ENCODE measurements at regions of chr3 and their contacts with region 1.

Region 1: GRCh38 chr3:12782172-12782815 is 14.2 kb upstream of the CAND2 start:
- DNase-seq: no peak
- H3K4me3 ChIP-seq: no peak overlapping the region
- H3K27ac ChIP-seq: no peak overlapping the region
- H3K4me1 ChIP-seq: peaks cover 0 to 4% (median 1%) of the 10 kb centered on the region in 4 experiments; a peak in 2 of 7 replicates
- H3K27me3 ChIP-seq: no peaks in the 10 kb centered on the region
- CTCF ChIP-seq: no peak
- EP300 ChIP-seq: no peak
- POLR2A ChIP-seq: 0 out of 3 replicates have a peak, but pooled peaks of 1 of the 2 experiments have one; percentile 26
- RAD21 ChIP-seq: no peak

Region 2: GRCh38 chr3:12758025-12758830 is 24.1 kb before region 1 on chr3:
- CTCF ChIA-PET with region 1: interaction called, 29 read pairs
- POLR2A ChIA-PET with region 1: no interaction called
- DNase-seq: no peak
- H3K4me3 ChIP-seq: no peak overlapping the region
- H3K27ac ChIP-seq: no peak overlapping the region
- H3K4me1 ChIP-seq: peaks cover 0 to 13% (median 8%) of the 10 kb centered on the region in 4 experiments; a peak in 5 of 7 replicates
- H3K27me3 ChIP-seq: no peaks in the 10 kb centered on the region
- CTCF ChIP-seq: no peak
- EP300 ChIP-seq: no peak
- POLR2A ChIP-seq: no peak
- RAD21 ChIP-seq: no peak

Region 3: DNA sequence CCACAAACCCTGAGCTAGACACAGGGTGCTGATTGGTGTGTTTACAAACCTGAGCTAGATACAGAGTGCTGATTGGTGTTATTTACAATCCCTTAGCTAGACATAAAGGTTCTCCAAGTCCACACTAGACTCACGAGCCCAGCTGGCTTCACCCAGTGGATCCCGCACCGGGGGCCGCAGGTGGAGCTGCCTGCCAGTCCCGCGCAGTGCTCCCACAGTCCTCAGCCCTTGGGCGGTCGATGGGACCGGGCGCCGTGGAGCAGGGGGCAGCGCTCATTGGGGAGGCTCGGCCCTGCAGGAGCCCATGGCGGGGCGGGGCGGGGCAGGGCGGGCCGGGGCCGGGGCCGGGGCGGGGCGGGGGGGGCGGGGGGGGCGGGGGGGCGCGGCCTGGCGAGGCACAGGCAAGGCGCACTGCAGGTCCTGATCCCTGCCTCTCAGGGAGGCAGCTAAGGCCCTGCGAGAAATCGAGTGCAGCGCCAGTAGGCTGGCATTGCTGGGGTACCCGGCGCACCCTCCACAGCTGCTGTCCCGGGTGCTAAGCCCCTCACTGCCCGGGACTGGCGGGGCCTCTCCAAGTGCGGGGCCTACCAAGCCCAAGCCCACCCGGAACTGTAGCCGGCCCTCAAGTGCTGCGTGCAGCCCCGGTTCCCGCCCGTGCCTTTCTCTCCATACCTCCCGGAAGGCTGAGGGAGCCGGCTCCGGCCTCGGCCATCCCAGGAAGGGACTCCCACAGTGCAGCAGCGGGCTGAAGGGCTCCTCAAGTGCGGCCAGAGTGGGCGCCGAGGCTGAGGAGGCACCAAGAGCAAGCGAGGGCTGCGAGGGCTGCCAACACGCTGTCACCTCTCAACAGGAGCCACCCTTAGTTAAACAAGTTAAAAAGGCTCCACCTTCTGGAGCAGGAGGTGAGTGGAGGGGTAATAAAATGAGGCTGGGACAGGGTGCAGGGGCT is 13.4 kb before region 1 on chr3:
- CTCF ChIA-PET with region 1: interaction called, 35 read pairs
- POLR2A ChIA-PET with region 1: interaction called, 3 read pairs
- DNase-seq: peak in 1 of 2 experiments; percentile 68
- H3K4me3 ChIP-seq: peak overlapping the region in 2 of 4 experiments; percentile 0 to 44; a peak in 4 of 8 replicates
- H3K27ac ChIP-seq: no peak overlapping the region
- H3K4me1 ChIP-seq: no peaks in the 10 kb centered on the region
- H3K27me3 ChIP-seq: peaks cover 0 to 3% (median 0%) of the 10 kb centered on the region in 4 experiments; a peak in 3 of 7 replicates
- CTCF ChIP-seq: peak in 1 of 3 experiments; percentile 6; a peak in 1 of 4 replicates
- EP300 ChIP-seq: no peak
- POLR2A ChIP-seq: no peak
- RAD21 ChIP-seq: no peak

Region 4: DNA sequence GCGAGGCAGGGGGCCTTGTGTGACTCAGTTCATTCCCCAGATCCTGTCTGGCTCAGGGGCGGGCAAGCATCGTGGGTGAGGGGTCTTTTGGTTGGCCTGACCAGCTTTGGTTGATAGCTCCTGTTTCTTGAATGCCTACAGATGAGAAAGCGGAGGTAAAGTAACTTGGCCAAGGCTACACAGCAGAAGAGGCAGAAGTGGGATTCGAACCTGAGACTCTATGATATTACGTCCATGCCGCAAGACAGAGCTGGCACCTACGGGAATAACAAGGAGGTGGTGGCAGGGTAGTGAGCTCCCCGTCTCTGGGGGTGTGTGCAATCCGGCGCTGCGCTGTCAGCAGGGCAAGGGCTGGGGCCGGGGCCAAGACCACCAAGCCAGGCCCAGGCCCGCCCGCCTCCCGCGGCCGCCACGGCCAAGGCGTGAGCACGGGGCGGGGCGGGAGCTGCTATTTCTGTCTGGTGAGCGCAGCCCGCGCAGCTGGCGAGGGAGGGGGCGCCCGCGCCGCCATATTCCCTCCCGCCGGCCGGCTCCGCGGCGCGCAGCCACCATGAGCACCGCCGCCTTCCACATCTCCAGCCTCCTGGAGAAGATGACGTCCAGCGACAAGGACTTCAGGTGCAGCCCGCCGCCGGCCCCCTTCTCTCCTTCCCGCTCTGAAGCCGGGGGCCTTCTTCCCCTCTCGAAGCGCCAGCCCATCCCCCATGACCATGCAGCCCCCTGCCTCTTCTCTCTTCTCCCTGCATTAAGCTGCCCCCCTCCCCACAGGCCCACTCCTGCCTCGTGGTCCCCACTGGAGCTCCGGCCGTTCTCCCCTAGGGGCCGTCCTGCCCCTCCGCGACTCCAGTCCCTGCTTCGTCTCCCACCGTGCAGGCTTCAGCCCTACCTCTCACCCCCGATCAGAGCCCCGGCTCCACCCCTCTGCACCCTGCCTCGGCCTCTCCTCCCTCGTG is 14.2 kb after region 1 on chr3 and contains the start of gene CAND2:
- CTCF ChIA-PET with region 1: interaction called, 52 read pairs
- POLR2A ChIA-PET with region 1: interaction called, 8 read pairs
- DNase-seq: peak in 1 of 2 experiments; percentile 71
- H3K4me3 ChIP-seq: peak within 1 kb of the TSS; percentile 69 to 88 (median 85)
- H3K27ac ChIP-seq: no peak within 1 kb of the TSS
- H3K4me1 ChIP-seq: peaks cover 0 to 10% (median 2%) of the 10 kb centered on the region in 4 experiments; a peak in 4 of 7 replicates
- H3K27me3 ChIP-seq: no peaks in the 10 kb centered on the region
- CTCF ChIP-seq: no peak
- EP300 ChIP-seq: no peak
- POLR2A ChIP-seq: peak in 1 of 2 experiments; percentile 38; a peak in 1 of 3 replicates
- RAD21 ChIP-seq: no peak; a peak in 1 of 4 replicates
- total RNA-seq, gene CAND2: 8.7 and 11.2 TPM in 2 replicates

Region 5: GRCh38 chr3:12803371-12803770 is 21.1 kb after region 1 on chr3:
- CTCF ChIA-PET with region 1: interaction called, 54 read pairs
- POLR2A ChIA-PET with region 1: no interaction called
- DNase-seq: no peak
- H3K4me3 ChIP-seq: no peak overlapping the region
- H3K27ac ChIP-seq: no peak overlapping the region
- H3K4me1 ChIP-seq: no peaks in the 10 kb centered on the region
- H3K27me3 ChIP-seq: no peaks in the 10 kb centered on the region
- CTCF ChIP-seq: no peak
- EP300 ChIP-seq: no peak
- POLR2A ChIP-seq: no peak
- RAD21 ChIP-seq: no peak

Region 6: DNA sequence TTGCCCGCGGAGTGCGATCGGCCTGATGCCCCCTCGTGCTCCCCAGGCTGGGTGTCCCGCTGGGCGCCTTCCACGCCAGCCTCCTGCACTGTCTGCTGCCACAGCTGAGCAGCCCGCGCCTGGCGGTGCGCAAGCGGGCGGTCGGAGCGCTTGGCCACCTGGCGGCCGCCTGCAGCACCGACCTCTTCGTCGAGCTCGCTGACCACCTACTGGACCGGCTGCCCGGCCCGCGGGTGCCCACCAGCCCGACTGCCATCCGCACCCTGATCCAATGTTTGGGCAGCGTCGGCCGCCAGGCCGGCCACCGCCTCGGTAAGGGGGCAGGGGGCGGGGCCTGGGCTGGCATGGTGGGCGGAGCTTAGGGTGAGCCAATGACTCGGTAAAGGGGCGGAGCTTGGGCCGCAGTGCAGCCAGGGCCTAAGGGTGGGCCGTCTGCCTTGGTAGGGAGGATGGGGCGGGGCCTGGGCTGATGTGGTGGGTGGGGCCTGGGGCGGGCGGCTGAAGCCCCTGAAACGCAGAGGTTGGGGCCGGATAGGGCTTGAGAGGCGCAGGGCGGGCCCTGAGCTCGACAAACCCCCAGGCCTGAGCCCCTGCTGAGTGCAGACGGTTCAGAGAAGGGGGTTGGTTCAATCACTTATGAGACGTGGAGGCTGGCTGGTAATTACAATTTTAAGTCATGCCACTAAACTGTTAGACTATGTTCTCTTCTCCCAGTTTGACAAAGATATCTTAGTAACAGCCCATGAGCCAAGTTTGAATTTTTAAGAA is 27.9 kb after region 1 on chr3:
- CTCF ChIA-PET with region 1: interaction called, 54 read pairs
- POLR2A ChIA-PET with region 1: no interaction called
- DNase-seq: peak; percentile 90 to 99
- H3K4me3 ChIP-seq: peak overlapping the region; percentile 38 to 64 (median 60)
- H3K27ac ChIP-seq: no peak overlapping the region
- H3K4me1 ChIP-seq: peaks cover 0 to 8% (median 4%) of the 10 kb centered on the region in 4 experiments; a peak in 4 of 7 replicates
- H3K27me3 ChIP-seq: no peaks in the 10 kb centered on the region
- CTCF ChIP-seq: peak in 2 of 3 experiments; percentile 60 to 70; a peak in 3 of 4 replicates
- EP300 ChIP-seq: no peak
- POLR2A ChIP-seq: peak in 1 of 2 experiments; percentile 55; a peak in 1 of 3 replicates
- RAD21 ChIP-seq: peak; percentile 38 to 47; a peak in 3 of 4 replicates

Region 7: GRCh38 chr3:12817343-12817710 is 35.0 kb after region 1 on chr3:
- CTCF ChIA-PET with region 1: interaction called, 26 read pairs
- POLR2A ChIA-PET with region 1: no interaction called
- DNase-seq: no peak
- H3K4me3 ChIP-seq: no peak overlapping the region
- H3K27ac ChIP-seq: no peak overlapping the region
- H3K4me1 ChIP-seq: no peaks in the 10 kb centered on the region; a peak in 1 of 7 replicates
- H3K27me3 ChIP-seq: no peaks in the 10 kb centered on the region
- CTCF ChIP-seq: no peak
- EP300 ChIP-seq: no peak
- POLR2A ChIP-seq: no peak
- RAD21 ChIP-seq: no peak

Measured in H1 (cell line).